Common myeloid progenitor, CD34-positive (primary cell): ENCODE measurements at regions of chrX and their contacts with region 1.

Region 1: DNA sequence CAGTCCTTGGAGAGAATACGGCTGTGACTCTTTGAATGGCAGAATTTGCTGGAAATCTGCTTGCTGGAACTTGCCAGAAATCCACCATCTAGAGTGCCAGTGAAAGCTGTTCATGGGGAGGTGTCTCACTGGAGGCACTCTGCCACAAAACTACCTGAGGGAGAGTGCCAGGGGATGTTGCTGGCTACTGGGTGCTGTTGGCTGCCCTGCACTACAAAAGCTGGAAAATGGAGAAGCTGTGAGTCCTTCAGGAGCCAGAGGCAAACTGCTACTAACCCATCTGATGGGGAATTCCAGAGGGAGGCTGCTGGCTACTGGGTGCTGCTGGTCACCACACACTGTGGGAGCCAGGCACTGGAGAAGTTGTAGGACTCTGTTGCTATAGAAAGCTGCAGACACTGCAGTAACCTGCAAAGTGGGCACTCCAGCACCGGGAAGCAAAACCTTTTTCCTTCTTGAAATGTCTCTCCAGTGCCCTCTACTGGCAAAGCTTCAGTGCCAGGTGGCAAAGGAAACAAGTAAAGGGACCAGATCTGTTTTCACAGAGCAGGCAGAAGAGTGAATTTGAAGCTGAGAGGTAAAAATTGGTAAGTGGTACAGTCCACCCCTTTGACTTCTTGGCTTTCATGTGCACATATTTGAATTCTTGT is 47.8 kb upstream of the HSD17B10 start:
- DNase-seq: peak; percentile 58 to 81 (median 73)
- H3K4me3 ChIP-seq: no peak overlapping the region
- H3K27ac ChIP-seq: no peak overlapping the region
- H3K4me1 ChIP-seq: peaks cover 0 to 3% (median 0%) of the 10 kb centered on the region in 4 experiments
- H3K27me3 ChIP-seq: peaks cover 0 to 6% (median 0%) of the 10 kb centered on the region in 5 experiments

Region 2: GRCh38 chrX:53494436-53494835 is 12.5 kb after region 1 on chrX:
- CTCF ChIA-PET with region 1: interaction called, 17 read pairs
- POLR2A ChIA-PET with region 1: no interaction called
- DNase-seq: peak; percentile 8 to 51 (median 46)
- H3K4me3 ChIP-seq: no peak overlapping the region
- H3K27ac ChIP-seq: no peak overlapping the region
- H3K4me1 ChIP-seq: peaks cover 0 to 10% (median 8%) of the 10 kb centered on the region in 4 experiments
- H3K27me3 ChIP-seq: peaks cover 0 to 11% (median 0%) of the 10 kb centered on the region in 5 experiments

Region 3: DNA sequence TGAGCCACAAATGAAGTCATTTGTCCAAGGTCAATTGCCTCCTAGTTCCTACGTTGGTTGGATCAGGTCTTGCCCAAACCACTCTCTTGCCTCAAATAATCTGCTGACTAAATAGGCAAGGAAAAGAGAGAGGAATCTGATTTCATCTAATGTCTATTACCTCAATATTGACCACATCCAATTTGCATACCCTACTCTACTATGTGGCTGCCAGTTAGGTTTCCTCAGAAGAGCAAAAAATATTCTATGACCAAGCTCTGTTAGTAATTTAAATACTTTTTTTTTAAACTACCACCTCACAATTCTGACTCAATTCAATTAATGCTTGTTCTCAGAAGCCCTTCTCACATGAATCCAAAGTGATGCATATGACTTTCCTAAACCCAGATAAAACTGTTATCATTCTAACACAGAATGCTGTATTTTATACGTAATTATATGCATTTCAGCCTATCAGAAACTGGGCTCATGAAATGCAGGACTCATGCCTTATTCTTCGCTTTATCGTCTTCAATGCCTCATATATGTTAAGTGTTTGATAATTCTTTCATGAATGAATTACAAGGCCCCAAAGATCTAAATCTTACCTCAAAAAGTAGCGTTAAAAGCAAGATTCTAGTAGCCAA is 106.0 kb after region 1 on chrX:
- CTCF ChIA-PET with region 1: no interaction called
- POLR2A ChIA-PET with region 1: no interaction called
- DNase-seq: no peak
- H3K4me3 ChIP-seq: no peak overlapping the region
- H3K27ac ChIP-seq: no peak overlapping the region
- H3K4me1 ChIP-seq: no peaks in the 10 kb centered on the region
- H3K27me3 ChIP-seq: peaks cover 0 to 5% (median 0%) of the 10 kb centered on the region in 5 experiments

Region 4: DNA sequence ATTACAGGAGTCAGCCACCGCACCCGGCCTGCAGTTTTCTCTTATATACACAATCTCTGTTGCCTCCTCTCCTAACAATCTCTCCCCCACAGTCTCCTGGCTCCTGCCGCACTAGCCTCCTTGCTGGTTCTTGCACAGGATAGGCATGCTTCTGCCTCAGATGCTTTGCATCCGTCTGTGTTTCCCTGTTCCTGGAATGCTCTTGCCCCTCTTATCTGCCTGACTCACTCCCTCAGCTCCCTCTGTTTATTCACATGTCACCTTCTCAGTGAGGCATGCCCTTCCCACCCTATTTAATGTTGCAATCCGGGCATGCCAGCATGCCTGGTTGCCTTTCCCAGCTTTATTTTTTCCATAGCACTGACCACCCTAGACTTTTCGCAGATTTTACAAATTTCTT is 400.4 kb after region 1 on chrX:
- CTCF ChIA-PET with region 1: no interaction called
- POLR2A ChIA-PET with region 1: no interaction called
- DNase-seq: no peak
- H3K4me3 ChIP-seq: no peak overlapping the region
- H3K27ac ChIP-seq: no peak overlapping the region
- H3K4me1 ChIP-seq: no peaks in the 10 kb centered on the region
- H3K27me3 ChIP-seq: no peaks in the 10 kb centered on the region